ENCODE measurements at regions of chr19 and their contacts with region 1.

Region 1: DNA sequence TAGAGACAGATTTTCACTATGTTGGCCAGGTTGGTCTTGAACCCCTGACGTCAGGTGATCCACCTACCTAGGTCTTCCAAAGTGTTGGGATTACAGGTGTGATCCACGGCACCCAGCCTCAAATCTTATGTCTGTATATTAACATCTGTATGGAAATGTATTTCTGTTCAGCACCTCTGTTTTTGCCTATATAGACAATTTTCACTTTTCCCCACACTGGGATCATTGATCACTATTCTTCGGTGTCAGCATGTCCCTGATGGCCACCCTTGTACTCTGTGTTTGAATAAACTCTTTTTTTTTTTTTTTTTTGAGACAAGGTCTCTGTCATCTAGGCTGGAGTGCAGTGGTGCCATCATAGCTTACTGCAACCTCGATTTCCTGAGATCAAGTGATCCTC is 3.2 kb upstream of the ZNF627 start:
- DNase-seq: no peak
- H3K4me3 ChIP-seq: no peak overlapping the region
- H3K27me3 ChIP-seq: no peaks in the 10 kb centered on the region
- CTCF ChIP-seq: no peak

Region 2: GRCh38 chr19:11374433-11375142 is 219.5 kb before region 1 on chr19 and contains the start of gene SWSAP1:
- CTCF ChIA-PET with region 1: no interaction called
- POLR2A ChIA-PET with region 1: interaction called, 12 read pairs
- DNase-seq: peak; percentile 98
- H3K4me3 ChIP-seq: peak within 1 kb of the TSS; percentile 63
- H3K27me3 ChIP-seq: no peaks in the 10 kb centered on the region
- CTCF ChIP-seq: no peak
- polyA plus RNA-seq, gene SWSAP1: 1.0 TPM in 2 replicates